ENCODE measurements at regions of chr2 and their contacts with region 1.

Region 1: GRCh38 chr2:134232868-134233727 is 20.8 kb upstream of the MGAT5 start:
- DNase-seq: peak; percentile 47
- H3K4me3 Mint-ChIP-seq: no peak overlapping the region
- H3K27ac Mint-ChIP-seq: peak overlapping the region; percentile 80
- H3K4me1 Mint-ChIP-seq: peaks cover 70% of the 10 kb centered on the region
- H3K27me3 Mint-ChIP-seq: no peaks in the 10 kb centered on the region

Region 2: DNA sequence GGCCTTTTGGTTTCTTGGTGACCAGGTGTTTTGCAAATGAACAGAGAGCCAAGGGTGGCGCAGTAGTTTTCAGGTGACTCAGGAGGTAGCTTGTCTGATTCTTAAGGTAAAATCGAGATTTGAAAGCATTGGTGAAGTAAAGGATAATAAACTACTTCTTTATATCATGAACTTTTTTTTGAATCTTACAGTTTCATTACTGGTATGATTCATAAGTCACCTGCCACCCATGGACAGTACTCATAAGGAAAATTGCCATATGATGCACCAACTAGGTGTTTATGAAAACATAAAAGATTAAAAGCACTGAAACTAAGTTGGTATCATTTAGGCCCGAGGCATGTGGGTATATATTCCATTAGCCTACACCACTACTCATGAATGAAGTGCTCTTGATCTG is 63.3 kb before region 1 on chr2:
- CTCF ChIA-PET with region 1: no interaction called
- intact Hi-C with region 1: loop called (anchors 1 kb)
- DNase-seq: peak; percentile 45
- H3K4me3 Mint-ChIP-seq: no peak overlapping the region
- H3K27ac Mint-ChIP-seq: no peak overlapping the region
- H3K4me1 Mint-ChIP-seq: peaks cover 68% of the 10 kb centered on the region
- H3K27me3 Mint-ChIP-seq: no peaks in the 10 kb centered on the region

Region 3: DNA sequence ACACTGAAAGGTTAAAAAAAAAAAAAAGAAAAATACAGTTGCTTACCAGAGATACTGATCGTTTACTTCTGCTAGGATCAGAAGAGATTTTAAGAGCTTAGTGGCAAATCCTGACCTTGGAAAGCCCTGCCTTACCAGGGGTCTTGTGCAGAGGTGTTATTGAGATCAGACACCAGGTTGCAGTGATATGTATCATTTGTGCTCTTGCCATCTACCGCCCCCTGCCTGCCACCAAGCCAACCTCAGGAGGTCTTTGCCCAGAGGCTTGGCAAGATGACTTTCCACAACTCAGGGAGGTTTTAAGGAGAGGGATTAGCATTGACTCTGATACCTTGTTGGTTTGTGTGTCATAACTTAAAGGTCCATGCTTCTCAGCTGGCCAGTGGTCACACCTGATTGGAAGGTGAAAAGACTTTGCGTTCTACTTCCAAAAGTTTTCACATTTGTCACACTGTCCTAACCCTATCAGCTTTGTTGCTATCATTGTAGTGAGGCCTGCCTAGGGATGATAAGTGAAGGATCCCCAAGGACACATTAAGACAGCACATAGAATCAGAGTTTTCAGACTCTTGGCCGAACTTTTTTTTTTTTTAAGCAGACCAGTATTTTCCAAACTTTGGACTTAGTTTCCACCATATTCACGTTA is 25.4 kb before region 1 on chr2:
- CTCF ChIA-PET with region 1: interaction called, 10 read pairs
- intact Hi-C with region 1: no loop called
- DNase-seq: peak; percentile 81
- H3K4me3 Mint-ChIP-seq: no peak overlapping the region
- H3K27ac Mint-ChIP-seq: no peak overlapping the region
- H3K4me1 Mint-ChIP-seq: peaks cover 5% of the 10 kb centered on the region
- H3K27me3 Mint-ChIP-seq: no peaks in the 10 kb centered on the region

Region 4: GRCh38 chr2:134253804-134254203 is 20.7 kb after region 1 on chr2 and contains the start of gene MGAT5:
- CTCF ChIA-PET with region 1: interaction called, 3 read pairs
- intact Hi-C with region 1: loop called (anchors 1 kb)
- DNase-seq: no peak
- H3K4me3 Mint-ChIP-seq: no peak within 1 kb of the TSS
- H3K27ac Mint-ChIP-seq: no peak within 1 kb of the TSS
- H3K4me1 Mint-ChIP-seq: peaks cover 82% of the 10 kb centered on the region
- H3K27me3 Mint-ChIP-seq: peaks cover 2% of the 10 kb centered on the region
- total RNA-seq, gene MGAT5: 11.6 to 13.0 TPM

Region 5: GRCh38 chr2:134290358-134290757 is 57.3 kb after region 1 on chr2:
- CTCF ChIA-PET with region 1: no interaction called
- intact Hi-C with region 1: loop called (anchors 1 kb)
- DNase-seq: peak; percentile 30
- H3K4me3 Mint-ChIP-seq: no peak overlapping the region
- H3K27ac Mint-ChIP-seq: no peak overlapping the region
- H3K4me1 Mint-ChIP-seq: peaks cover 24% of the 10 kb centered on the region
- H3K27me3 Mint-ChIP-seq: no peaks in the 10 kb centered on the region

Region 6: DNA sequence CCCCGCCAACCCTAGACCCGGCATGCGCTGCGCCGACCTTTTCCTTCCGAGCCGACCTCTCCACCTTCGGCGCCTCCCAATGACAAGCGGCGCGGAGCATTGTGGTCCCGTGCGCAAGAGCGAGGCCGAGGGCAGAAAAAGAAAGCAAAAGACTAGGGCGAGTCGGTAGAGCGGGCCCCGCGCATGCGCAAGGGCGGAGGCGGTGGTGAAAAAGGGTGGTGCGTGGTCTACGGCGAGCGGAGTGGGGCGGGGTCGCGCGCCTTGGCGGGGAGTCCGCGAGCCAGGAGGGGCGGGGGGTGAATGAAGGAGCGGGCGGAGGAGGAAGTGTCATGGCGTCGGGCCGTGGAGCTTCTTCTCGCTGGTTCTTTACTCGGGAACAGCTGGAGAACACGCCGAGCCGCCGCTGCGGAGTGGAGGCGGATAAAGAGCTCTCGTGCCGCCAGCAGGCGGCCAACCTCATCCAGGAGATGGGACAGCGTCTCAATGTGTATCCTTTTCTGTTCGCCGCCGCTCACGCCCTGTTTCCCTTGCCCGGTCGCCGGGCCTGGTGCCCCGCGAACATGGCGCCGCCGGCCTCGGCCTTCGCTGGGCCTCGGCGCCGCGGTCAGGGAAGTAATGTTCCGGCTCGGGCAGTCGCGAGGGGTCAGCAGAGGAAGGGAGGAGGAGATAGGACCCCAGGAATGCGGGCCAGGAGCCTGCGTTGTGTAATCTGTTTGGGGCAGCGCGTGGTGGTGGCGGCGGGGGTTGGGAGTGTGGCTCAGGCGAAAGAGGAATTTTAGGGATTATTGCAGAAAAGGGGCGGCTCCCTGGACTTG is 685.6 kb after region 1 on chr2 and contains the start of gene CCNT2:
- CTCF ChIA-PET with region 1: no interaction called
- intact Hi-C with region 1: loop called (anchors 5 kb)
- DNase-seq: peak; percentile 99
- H3K4me3 Mint-ChIP-seq: peak within 1 kb of the TSS; percentile 95
- H3K27ac Mint-ChIP-seq: peak within 1 kb of the TSS; percentile 98
- H3K4me1 Mint-ChIP-seq: peaks cover 24% of the 10 kb centered on the region
- H3K27me3 Mint-ChIP-seq: no peaks in the 10 kb centered on the region
- total RNA-seq, gene CCNT2: 31.9 to 33.2 TPM

Measured in activated naive CD4-positive, alpha-beta T cell treated with anti-CD3 and anti-CD28 coated beads for 36 hours (primary cell).